Activated naive CD4-positive, alpha-beta T cell treated with anti-CD3 and anti-CD28 coated beads, Interleukin-2, amount 10 ng/mL, durations not matched to agents 7 days and 5 days (primary cell): ENCODE measurements at regions of chr1 and their contacts with region 1.

Region 1: DNA sequence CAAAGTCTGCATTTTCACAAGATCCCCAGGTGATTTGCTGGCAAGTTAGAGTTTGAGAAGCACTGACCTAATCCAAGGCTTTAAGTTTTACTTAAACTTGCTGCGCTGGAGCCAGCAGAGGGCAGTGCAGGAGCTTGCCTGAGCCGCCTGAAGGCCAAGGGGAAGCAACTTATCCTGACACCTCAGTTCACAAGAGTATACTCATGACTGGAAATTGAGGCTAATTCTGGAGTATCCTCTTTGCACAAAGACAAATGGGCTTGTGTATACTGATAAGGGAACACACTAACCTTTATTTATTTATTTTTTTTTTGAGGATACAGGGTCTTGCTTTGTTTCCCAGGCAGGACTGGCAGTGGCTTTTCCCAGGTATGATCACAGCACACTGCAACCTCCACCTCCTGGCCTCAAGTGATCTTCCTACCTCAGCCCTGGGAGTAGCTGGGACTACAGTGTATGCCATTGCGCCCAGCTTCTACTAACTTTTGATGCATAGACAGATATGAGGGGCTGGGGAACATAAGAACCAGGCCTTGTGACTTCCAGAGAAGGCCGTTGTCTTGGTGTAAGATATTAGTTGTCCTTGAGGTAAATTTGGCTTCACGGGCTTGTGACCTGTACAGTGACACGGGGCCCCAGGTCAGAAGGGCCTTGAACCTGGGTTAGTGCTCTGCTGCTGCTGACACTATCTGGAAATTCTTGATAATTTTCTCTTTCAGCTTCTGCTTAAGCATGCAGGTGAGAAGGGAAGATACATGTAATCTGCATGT is 29.0 kb upstream of the SLAMF1 start:
- DNase-seq: peak; percentile 85
- H3K4me3 Mint-ChIP-seq: no peak overlapping the region
- H3K27ac Mint-ChIP-seq: peak overlapping the region; percentile 79
- H3K4me1 Mint-ChIP-seq: peaks cover 28% of the 10 kb centered on the region
- H3K27me3 Mint-ChIP-seq: no peaks in the 10 kb centered on the region

Region 2: DNA sequence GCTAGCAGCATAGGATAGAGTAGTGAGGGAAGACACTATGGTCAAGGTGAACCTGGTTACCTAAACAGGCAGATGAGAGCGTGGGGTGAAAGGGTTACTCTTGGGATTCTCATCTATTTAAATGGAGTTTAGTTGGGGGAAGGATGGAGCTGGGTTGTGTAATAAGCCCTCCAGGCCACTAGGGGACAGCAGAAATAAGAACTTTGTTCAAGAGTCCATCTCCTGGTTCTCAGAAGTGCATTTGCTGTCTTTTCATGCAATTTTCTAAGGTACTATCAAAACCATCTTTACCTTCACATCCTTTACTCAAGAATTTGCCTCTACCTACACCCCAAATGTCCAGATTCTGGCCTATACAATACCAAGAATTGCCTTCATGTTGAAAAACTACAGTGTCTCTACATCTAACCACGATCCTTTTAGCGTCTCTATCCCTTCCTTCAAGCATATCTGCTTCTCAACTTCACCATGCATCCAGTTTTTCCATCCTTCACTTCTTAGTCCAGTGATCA is 57.0 kb before region 1 on chr1:
- CTCF ChIA-PET with region 1: interaction called, 69 read pairs
- DNase-seq: peak; percentile 52
- H3K4me3 Mint-ChIP-seq: no peak overlapping the region
- H3K27ac Mint-ChIP-seq: peak overlapping the region; percentile 44
- H3K4me1 Mint-ChIP-seq: peaks cover 72% of the 10 kb centered on the region
- H3K27me3 Mint-ChIP-seq: no peaks in the 10 kb centered on the region

Region 3: DNA sequence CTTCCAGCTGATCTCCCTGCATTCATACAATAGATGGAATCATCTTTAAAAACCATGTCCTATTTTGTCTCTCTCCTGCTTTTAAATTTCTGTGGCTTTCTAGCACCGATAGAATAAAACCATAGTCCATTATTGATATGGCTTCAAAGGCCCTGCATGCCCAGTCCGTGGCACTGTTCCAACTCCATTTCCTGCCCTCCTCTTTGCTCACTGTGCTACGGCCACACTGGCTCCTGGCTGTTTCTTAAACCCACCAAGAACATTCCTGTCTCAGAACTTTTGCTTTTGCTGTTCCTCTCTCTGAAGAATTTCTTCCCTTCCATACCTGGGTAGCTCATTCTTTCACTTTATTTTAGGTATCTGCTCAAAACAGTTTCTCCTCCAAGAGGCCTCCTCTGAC is 36.2 kb before region 1 on chr1:
- CTCF ChIA-PET with region 1: interaction called, 40 read pairs
- DNase-seq: no peak
- H3K4me3 Mint-ChIP-seq: peak overlapping the region; percentile 68
- H3K27ac Mint-ChIP-seq: peak overlapping the region; percentile 94
- H3K4me1 Mint-ChIP-seq: peaks cover 96% of the 10 kb centered on the region
- H3K27me3 Mint-ChIP-seq: no peaks in the 10 kb centered on the region

Region 4: GRCh38 chr1:160664573-160665051 is 11.2 kb before region 1 on chr1:
- CTCF ChIA-PET with region 1: interaction called, 15 read pairs
- DNase-seq: peak; percentile 68
- H3K4me3 Mint-ChIP-seq: peak overlapping the region; percentile 51
- H3K27ac Mint-ChIP-seq: peak overlapping the region; percentile 92
- H3K4me1 Mint-ChIP-seq: peaks cover 75% of the 10 kb centered on the region
- H3K27me3 Mint-ChIP-seq: no peaks in the 10 kb centered on the region

Region 5: GRCh38 chr1:160768295-160768657 is 92.5 kb after region 1 on chr1:
- CTCF ChIA-PET with region 1: interaction called, 104 read pairs
- DNase-seq: peak; percentile 93
- H3K4me3 Mint-ChIP-seq: peak overlapping the region; percentile 67
- H3K27ac Mint-ChIP-seq: peak overlapping the region; percentile 96
- H3K4me1 Mint-ChIP-seq: peaks cover 31% of the 10 kb centered on the region
- H3K27me3 Mint-ChIP-seq: no peaks in the 10 kb centered on the region

Region 6: GRCh38 chr1:160951443-160952128 is 275.8 kb after region 1 on chr1:
- CTCF ChIA-PET with region 1: interaction called, 23 read pairs
- DNase-seq: peak; percentile 86
- H3K4me3 Mint-ChIP-seq: no peak overlapping the region
- H3K27ac Mint-ChIP-seq: no peak overlapping the region
- H3K4me1 Mint-ChIP-seq: peaks cover 13% of the 10 kb centered on the region
- H3K27me3 Mint-ChIP-seq: peaks cover 10% of the 10 kb centered on the region

Region 7: GRCh38 chr1:160981584-160982411 is 306.0 kb after region 1 on chr1:
- CTCF ChIA-PET with region 1: no interaction called
- DNase-seq: peak; percentile 30
- H3K4me3 Mint-ChIP-seq: peak overlapping the region; percentile 61
- H3K27ac Mint-ChIP-seq: no peak overlapping the region
- H3K4me1 Mint-ChIP-seq: peaks cover 11% of the 10 kb centered on the region
- H3K27me3 Mint-ChIP-seq: peaks cover 54% of the 10 kb centered on the region